H1 (cell line): ENCODE measurements at regions of chr4 and their contacts with region 1.

Region 1: GRCh38 chr4:38030023-38030422 is 69.8 kb downstream of the PTTG2 start:
- DNase-seq: no peak
- H3K4me3 ChIP-seq: no peak overlapping the region
- H3K27ac ChIP-seq: no peak overlapping the region
- H3K4me1 ChIP-seq: no peaks in the 10 kb centered on the region
- H3K27me3 ChIP-seq: no peaks in the 10 kb centered on the region
- CTCF ChIP-seq: no peak
- EP300 ChIP-seq: no peak
- POLR2A ChIP-seq: no peak
- RAD21 ChIP-seq: no peak

Region 2: GRCh38 chr4:38015886-38016515 is 14.0 kb before region 1 on chr4:
- CTCF ChIA-PET with region 1: interaction called, 10 read pairs
- POLR2A ChIA-PET with region 1: no interaction called
- DNase-seq: no peak
- H3K4me3 ChIP-seq: no peak overlapping the region
- H3K27ac ChIP-seq: no peak overlapping the region
- H3K4me1 ChIP-seq: no peaks in the 10 kb centered on the region; a peak in 1 of 7 replicates
- H3K27me3 ChIP-seq: no peaks in the 10 kb centered on the region
- CTCF ChIP-seq: no peak
- EP300 ChIP-seq: no peak
- POLR2A ChIP-seq: no peak
- RAD21 ChIP-seq: no peak